PC-3 (cell line): ENCODE measurements at regions of chr10 and their contacts with region 1.

Region 1: DNA sequence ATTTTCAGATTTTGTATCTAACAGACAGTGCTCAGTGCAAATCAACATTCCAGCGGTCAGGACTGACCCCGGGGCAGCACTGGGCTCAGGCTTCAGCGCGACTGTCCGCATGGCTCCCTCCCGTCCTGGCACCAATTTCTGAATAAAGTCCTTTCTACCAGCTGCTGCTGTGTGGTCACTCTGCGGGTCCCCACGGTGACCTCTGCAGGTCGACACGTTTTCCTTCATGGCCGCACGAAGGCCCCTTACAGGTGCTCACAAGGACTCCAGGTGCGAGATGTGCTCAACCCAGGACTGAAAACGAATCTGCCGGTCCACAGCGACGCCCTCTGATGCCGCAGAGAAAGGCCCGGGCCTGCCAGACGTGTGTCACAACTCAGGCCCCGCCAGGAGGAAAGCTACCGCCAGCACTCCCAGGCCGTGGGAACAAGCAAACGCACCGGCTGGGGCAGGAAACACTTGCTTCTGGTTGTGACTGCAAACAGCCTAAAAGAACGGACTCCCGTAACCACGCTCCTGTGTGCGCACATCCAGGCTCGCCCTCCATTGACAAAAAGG is 3.7 kb upstream of the UTF1 start:
- DNase-seq: peak; percentile 50
- ATAC-seq: peak; percentile 90
- H3K4me3 ChIP-seq: no peak overlapping the region
- H3K27ac ChIP-seq: no peak overlapping the region
- H3K4me1 ChIP-seq: no peaks in the 10 kb centered on the region
- H3K27me3 ChIP-seq: 0 out of 2 replicates have a peak, but pooled peaks cover 14% of the 10 kb centered on the region
- CTCF ChIP-seq: peak; percentile 47

Region 2: GRCh38 chr10:132862485-132863420 is 363.6 kb before region 1 on chr10:
- CTCF ChIA-PET with region 1: no interaction called
- POLR2A ChIA-PET with region 1: no interaction called
- intact Hi-C with region 1: no loop called
- DNase-seq: no peak
- ATAC-seq: no peak
- H3K4me3 ChIP-seq: no peak overlapping the region
- H3K27ac ChIP-seq: no peak overlapping the region
- H3K4me1 ChIP-seq: no peaks in the 10 kb centered on the region
- H3K27me3 ChIP-seq: peaks cover 12% of the 10 kb centered on the region
- CTCF ChIP-seq: no peak

Region 3: DNA sequence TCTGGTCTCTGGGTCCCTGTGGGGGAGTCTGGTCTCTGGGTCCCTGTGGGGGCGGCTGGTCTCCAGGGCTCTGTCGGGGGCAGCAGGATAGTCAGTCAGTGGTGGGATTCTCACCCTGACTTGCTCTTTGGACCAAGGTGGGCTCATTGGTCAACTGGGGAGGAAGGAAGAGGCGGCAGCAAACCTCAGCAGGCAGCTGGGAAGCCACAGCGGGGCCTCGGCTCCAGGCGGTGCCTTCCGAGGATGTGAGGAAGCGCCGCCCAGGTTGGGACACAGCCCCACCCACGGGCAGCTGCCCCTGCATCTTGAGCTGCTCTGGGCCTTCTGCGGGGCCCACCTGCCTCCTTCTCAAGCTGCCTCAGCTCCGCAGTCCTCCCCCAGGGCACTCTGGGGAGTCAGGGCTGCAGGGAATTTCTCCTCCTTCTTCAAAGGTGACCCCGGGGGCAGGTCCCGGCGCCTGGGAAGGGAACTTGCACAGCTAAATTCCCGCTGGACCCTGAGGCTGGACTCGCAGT is 86.7 kb before region 1 on chr10:
- CTCF ChIA-PET with region 1: no interaction called
- POLR2A ChIA-PET with region 1: no interaction called
- intact Hi-C with region 1: loop called (anchors 5 kb)
- DNase-seq: no peak
- ATAC-seq: no peak; the same call in 1 of the 2 replicates
- H3K4me3 ChIP-seq: no peak overlapping the region
- H3K27ac ChIP-seq: no peak overlapping the region
- H3K4me1 ChIP-seq: no peaks in the 10 kb centered on the region
- H3K27me3 ChIP-seq: no peaks in the 10 kb centered on the region
- CTCF ChIP-seq: no peak

Region 4: GRCh38 chr10:133267293-133267692 is 41.0 kb after region 1 on chr10:
- CTCF ChIA-PET with region 1: no interaction called
- POLR2A ChIA-PET with region 1: no interaction called
- intact Hi-C with region 1: no loop called
- DNase-seq: no peak
- ATAC-seq: no peak
- H3K4me3 ChIP-seq: no peak overlapping the region
- H3K27ac ChIP-seq: no peak overlapping the region
- H3K4me1 ChIP-seq: peaks cover 22% of the 10 kb centered on the region
- H3K27me3 ChIP-seq: no peaks in the 10 kb centered on the region
- CTCF ChIP-seq: no peak